AG04449 (cell line): ENCODE measurements at regions of chr7 and their contacts with region 1.

Region 1: GRCh38 chr7:786472-787255 is 45.6 kb upstream of the SUN1 start:
- DNase-seq: no peak
- H3K4me3 ChIP-seq: no peak overlapping the region
- CTCF ChIP-seq: peak; percentile 94

Region 2: DNA sequence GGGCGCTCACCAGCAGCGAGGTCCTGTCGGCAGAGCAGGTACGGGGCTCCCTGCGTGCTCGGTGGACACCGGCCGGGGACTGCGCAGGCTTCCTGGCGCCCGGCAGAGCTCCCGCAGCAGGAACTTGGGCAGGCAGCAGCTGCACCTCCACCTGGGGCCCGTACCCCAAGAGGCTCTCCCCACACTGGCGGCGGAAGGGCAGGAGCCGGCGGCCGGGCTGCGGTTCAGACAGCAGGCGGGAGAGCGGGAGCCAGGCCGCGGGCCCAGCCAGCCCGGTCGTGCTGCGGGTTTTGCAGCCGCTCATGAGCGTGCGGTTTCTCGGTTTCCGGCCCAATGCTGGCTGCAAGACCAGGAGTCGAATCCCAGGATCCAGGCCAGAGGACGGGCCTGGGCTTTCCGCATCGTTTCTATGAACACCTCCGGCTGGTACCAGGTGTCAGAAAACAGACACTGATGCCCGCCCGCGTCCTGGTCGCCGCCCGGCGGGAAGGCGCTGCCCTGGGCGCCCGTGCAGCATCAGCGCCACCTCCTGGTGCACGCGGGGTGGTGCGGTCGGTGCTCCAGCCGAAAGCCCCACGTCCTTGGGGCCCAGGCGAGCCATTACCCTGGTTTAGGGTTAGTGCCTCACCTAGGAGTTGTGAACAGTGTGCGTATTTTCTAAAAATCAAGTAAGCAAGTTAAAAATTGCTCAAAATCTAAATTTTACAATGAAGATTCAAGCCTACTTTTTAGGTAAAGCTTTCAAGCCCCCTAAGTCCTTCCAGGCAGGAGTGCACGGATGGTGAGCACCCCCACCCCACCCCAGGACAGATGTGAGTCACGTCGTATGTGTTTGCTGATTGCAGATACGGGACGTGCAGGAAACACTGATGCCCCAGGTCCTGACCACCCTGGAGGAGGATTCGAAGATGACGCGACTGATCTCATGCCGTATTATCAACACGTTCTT is 12.2 kb before region 1 on chr7:
- CTCF ChIA-PET with region 1: interaction called, 16 read pairs
- POLR2A ChIA-PET with region 1: no interaction called
- DNase-seq: no peak
- H3K4me3 ChIP-seq: no peak overlapping the region
- CTCF ChIP-seq: peak; percentile 97

Region 3: GRCh38 chr7:798906-799470 is 12.3 kb after region 1 on chr7:
- CTCF ChIA-PET with region 1: interaction called, 10 read pairs
- POLR2A ChIA-PET with region 1: no interaction called
- DNase-seq: no peak
- H3K4me3 ChIP-seq: no peak overlapping the region
- CTCF ChIP-seq: no peak

Region 4: GRCh38 chr7:867672-868486 is 81.2 kb after region 1 on chr7:
- CTCF ChIA-PET with region 1: interaction called, 171 read pairs
- POLR2A ChIA-PET with region 1: no interaction called
- DNase-seq: no peak
- H3K4me3 ChIP-seq: no peak overlapping the region
- CTCF ChIP-seq: peak; percentile 15

Region 5: DNA sequence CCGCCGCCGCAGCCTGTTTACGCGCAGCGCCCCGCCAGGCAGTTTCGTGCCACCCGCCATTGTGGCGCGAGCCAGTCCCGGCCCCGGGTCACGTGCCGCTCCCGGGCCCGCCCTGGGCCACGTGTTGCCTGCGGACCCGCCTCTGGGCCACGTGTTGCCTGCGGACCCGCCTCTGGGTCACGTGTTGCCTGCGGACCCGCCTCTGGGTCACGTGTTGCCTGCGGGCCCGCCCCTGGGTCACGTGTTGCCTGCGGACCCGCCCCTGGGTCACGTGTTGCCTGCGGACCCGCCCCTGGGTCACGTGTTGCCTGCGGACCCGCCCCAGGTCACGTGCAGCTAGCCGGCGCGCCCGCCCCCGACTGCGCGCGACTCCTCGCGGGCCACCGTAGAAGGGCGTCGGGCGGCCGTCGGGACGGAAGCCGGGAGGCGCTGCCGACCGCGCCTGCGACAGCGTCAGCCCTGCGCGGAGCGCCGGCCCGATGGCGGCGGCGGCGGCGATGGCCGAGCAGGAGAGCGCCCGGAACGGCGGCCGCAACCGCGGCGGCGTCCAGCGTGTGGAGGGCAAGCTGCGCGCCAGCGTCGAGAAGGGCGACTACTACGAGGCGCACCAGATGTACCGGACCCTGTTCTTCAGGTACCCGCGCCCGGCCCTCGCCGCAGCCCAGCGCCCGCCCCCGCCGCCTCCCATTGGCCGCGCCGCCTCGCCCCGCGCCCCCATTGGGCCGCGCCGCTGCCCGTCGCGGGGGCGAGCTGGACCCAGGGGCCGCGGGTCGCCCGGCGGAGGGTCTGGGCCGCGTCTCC is 89.7 kb after region 1 on chr7 and contains the start of gene GET4:
- CTCF ChIA-PET with region 1: interaction called, 171 read pairs
- POLR2A ChIA-PET with region 1: no interaction called
- DNase-seq: peak; percentile 62
- H3K4me3 ChIP-seq: peak within 1 kb of the TSS; percentile 91
- CTCF ChIP-seq: peak; percentile 25